ENCODE measurements at regions of chr2 and their contacts with region 1.

Region 1: GRCh38 chr2:230153390-230153976 is 66.3 kb downstream of the SP110 start:
- DNase-seq: no peak
- ATAC-seq: no peak
- H3K4me3 ChIP-seq: no peak overlapping the region
- H3K27ac ChIP-seq: no peak overlapping the region
- H3K4me1 ChIP-seq: no peaks in the 10 kb centered on the region
- H3K27me3 ChIP-seq: no peaks in the 10 kb centered on the region
- CTCF ChIP-seq: no peak

Region 2: DNA sequence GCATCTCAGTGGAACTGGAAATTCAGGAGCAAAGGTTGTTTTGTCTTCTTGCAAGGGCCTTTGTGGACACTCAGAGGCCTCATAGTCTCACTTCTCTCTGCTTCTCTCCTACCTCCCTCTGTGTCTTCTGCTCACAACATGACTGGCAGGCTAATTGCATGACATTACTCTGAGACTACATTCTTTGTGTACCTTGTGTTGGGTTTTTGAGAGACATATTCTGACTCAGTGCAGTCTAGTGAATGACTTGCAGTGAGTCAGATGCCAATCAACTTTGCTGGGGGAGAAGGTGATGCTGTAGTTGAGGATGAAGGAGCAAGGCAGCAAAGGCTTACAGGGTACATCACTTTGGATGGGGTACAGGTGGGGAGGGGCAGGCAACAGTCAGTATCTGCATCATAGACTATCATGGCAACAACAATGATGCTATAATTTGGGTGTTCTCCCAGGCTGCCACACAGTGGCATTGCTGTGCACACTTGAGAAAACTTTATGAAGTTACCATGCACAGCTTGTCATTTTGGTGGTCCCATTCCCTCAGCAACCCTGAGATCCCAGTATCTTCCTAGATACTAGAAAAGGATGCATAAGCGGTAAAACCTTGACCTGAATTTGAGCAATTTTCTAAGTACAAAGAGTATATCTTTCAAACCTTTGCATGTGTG is 15.4 kb before region 1 on chr2:
- CTCF ChIA-PET with region 1: no interaction called
- POLR2A ChIA-PET with region 1: interaction called, 14 read pairs
- in situ Hi-C with region 1: no loop called
- intact Hi-C with region 1: no loop called
- DNase-seq: peak; percentile 77
- ATAC-seq: peak; percentile 77
- H3K4me3 ChIP-seq: no peak overlapping the region
- H3K27ac ChIP-seq: no peak overlapping the region
- H3K4me1 ChIP-seq: no peaks in the 10 kb centered on the region
- H3K27me3 ChIP-seq: no peaks in the 10 kb centered on the region
- CTCF ChIP-seq: peak; percentile 31; the same call in 1 of the 2 replicates

Region 3: DNA sequence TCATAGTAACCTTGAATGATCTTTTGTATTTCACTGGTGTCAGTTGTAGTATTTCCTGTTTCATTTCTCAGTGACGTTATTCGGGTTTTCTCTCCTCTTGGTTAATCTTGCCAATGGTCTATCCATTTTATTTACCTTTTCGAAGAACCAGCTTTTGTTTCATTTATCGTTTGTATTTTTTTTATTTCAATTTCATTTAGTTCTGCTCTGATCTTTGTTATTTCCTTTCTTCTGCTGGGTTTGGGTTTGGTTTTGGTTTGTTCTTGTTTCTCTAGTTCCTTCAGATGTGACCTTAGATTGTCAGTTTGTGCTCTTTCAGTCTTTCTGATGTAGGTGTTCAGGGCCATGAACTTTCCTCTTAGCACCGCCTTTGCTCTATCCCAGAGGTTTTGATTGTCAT is 108.8 kb after region 1 on chr2:
- CTCF ChIA-PET with region 1: no interaction called
- POLR2A ChIA-PET with region 1: no interaction called
- in situ Hi-C with region 1: no loop called
- intact Hi-C with region 1: no loop called
- DNase-seq: no peak
- ATAC-seq: no peak
- H3K4me3 ChIP-seq: no peak overlapping the region
- H3K27ac ChIP-seq: no peak overlapping the region
- H3K4me1 ChIP-seq: no peaks in the 10 kb centered on the region
- H3K27me3 ChIP-seq: no peaks in the 10 kb centered on the region; the same call in 1 of the 2 replicates
- CTCF ChIP-seq: no peak

Region 4: DNA sequence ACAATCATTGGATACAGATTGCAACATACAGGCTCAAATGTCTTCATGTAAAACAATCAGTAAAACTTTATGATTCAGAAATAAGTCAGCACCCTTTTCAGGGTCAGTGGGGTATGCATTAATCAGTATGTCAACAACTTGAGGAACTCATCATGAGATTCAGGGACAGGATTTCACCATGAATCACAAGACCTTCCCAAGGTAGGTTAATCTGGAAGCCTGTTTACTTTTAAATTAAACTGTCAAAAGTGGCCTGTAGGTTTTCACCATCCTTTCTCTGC is 367.3 kb after region 1 on chr2:
- CTCF ChIA-PET with region 1: no interaction called
- POLR2A ChIA-PET with region 1: interaction called, 12 read pairs
- in situ Hi-C with region 1: no loop called
- intact Hi-C with region 1: no loop called
- DNase-seq: peak; percentile 8
- ATAC-seq: no peak
- H3K4me3 ChIP-seq: no peak overlapping the region
- H3K27ac ChIP-seq: no peak overlapping the region
- H3K4me1 ChIP-seq: no peaks in the 10 kb centered on the region
- H3K27me3 ChIP-seq: no peaks in the 10 kb centered on the region
- CTCF ChIP-seq: no peak

Measured in Panc1 (cell line).